Heart left ventricle (tissue), 16 donors: ENCODE measurements at regions of chr12 and their contacts with region 1.

Region 1: DNA sequence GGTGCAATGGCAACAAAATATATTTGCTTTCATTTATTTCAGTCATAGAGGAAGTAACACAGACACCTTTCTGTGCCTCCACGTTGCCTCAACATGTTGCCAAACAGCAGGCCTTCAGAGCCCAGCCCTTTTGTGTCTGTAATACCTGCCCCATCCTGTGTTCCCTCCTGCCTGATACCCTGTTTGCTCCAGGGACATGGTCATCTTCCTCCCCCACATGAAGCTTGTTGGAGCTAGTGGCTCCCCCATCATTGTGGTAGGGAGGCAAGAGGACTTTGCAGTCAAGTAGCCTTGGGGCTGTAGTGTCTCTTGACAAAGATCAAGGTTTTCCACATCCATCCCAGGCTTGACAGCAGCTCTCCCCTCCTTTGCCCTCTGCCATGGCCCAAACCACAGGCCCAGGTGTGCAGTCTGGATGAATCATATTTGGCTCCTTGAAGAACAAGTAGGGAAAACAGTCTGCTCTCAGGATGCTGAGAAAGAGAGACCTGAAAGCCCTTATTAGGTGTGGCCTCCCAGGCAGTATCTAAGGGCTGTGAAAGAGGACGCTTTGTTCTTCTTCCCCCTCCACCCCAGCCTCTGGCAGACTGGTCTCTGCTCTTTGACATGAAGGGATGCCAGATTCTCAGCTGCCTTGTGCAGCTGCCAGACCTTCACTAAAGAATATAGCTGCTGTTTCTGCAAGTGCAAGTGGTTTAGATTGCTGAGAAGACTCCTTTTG is 329.0 kb downstream of the C12orf75 start:
- DNase-seq: peak in 4 of 5 donors; percentile 24 to 59 (median 42)
- ATAC-seq: peak; percentile 85 to 92 (median 88)
- H3K4me3 ChIP-seq: no peak overlapping the region
- H3K27ac ChIP-seq: peak overlapping the region; percentile 45 to 83 (median 67)
- H3K4me1 ChIP-seq: peaks cover 0 to 32% (median 22%) of the 10 kb centered on the region in 12 donors
- H3K27me3 ChIP-seq: no peaks in the 10 kb centered on the region
- CTCF ChIP-seq: no peak
- POLR2A ChIP-seq: no peak

Region 2: GRCh38 chr12:105462831-105463230 is 196.7 kb before region 1 on chr12:
- intact Hi-C with region 1: loop called in 1 of 10 experiments (anchors 10 kb)
- DNase-seq: no peak
- ATAC-seq: no peak
- H3K4me3 ChIP-seq: no peak overlapping the region
- H3K27ac ChIP-seq: no peak overlapping the region
- H3K4me1 ChIP-seq: peaks cover 0 to 36% (median 11%) of the 10 kb centered on the region in 12 donors
- H3K27me3 ChIP-seq: no peaks in the 10 kb centered on the region
- CTCF ChIP-seq: no peak
- POLR2A ChIP-seq: no peak

Region 3: GRCh38 chr12:105741744-105742566 is 82.4 kb after region 1 on chr12:
- intact Hi-C with region 1: loop called in 1 of 10 experiments (anchors 5 kb)
- DNase-seq: peak in 4 of 5 donors; percentile 34 to 55 (median 43)
- ATAC-seq: peak in 3 of 4 donors; percentile 55 to 80 (median 67)
- H3K4me3 ChIP-seq: peak overlapping the region in 1 of 12 donors; percentile 4
- H3K27ac ChIP-seq: peak overlapping the region in 11 of 12 donors; percentile 33 to 76 (median 65)
- H3K4me1 ChIP-seq: peaks cover 19 to 61% (median 52%) of the 10 kb centered on the region in 12 donors
- H3K27me3 ChIP-seq: peaks cover 0 to 3% (median 0%) of the 10 kb centered on the region in 9 donors
- CTCF ChIP-seq: no peak
- POLR2A ChIP-seq: no peak